Activated B cell treated with CpG ODN at 0.5 μM for 24 hours (primary cell): ENCODE measurements at regions of chr10 and their contacts with region 1.

Region 1: DNA sequence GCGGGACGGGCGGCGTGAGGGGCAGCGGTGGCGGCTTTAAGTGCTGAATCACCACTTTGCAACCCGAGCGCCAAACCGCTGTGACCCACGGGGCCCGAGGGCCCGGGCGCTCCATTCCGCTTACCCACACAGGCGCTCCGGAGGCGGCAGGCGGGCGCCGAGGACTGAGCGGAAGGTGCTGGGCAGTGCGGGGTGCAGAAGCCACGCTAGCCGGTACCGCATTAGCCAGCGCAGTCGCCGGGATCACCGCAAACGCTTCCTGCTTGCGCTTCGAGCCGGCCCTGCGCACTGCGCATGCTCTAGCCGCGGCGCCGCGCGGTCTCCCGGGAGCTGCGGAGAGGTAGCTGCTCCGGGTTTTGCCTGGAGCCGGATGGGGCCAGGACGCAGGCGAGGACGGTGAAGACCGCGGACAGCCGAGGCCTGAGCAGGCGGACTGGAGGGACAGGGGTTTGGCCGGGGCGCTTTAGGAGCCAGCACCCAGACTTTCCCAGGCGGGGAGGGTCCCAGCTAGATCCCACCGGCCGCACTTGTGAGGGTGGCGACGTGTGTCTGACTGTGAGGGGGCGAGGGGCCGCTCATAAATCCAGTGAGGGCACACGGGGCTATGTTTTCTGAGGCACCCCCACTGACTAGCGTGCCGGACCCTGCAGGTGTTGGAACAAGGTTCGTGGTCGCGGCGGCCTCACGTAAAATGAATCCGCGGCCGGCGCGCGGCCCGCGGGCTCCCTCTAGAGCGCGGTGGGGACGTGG is at the start of gene IDE:
- DNase-seq: peak; percentile 84
- ATAC-seq: peak; percentile 76
- H3K4me3 Mint-ChIP-seq: peak within 1 kb of the TSS; percentile 88
- H3K27ac Mint-ChIP-seq: peak within 1 kb of the TSS; percentile 85
- H3K4me1 Mint-ChIP-seq: peaks cover 40% of the 10 kb centered on the region
- H3K27me3 Mint-ChIP-seq: no peaks in the 10 kb centered on the region
- CTCF ChIP-seq: no peak
- total RNA-seq, gene IDE: 37.7 and 39.2 TPM in 2 replicates

Region 2: DNA sequence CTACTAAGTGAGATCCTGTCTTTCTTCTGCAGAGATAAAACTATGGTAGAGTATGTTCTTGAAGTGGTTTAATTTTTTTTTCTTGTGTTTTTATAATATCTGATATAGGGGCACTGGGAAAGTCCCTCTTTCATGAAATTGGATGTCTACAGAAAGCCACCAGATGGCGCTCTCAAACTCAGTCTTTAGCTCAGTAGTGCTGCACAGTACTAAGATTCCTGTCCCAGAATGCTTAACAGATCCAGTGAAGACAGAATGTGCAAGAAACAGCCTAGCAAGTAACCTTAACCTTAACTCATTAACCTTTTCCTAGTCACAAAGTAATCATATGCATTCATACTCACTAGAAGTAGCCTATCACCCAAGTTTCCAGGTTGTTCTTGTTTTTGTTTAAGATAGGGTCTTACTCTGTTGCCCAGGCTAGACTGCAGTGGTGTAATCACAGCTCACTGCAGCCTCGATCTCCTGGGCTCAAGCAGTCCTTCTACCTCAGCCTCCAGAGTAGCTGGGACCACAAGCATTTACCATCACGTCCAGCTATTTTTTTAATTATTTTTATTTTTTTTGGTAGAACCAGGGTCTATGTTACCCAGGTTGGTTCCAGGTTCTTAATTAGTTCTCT is 56.8 kb before region 1 on chr10:
- CTCF ChIA-PET with region 1: interaction called, 143 read pairs
- POLR2A ChIA-PET with region 1: interaction called, 23 read pairs
- intact Hi-C with region 1: loop called (anchors 1 kb)
- DNase-seq: no peak
- ATAC-seq: peak; percentile 88
- H3K4me3 Mint-ChIP-seq: no peak overlapping the region
- H3K27ac Mint-ChIP-seq: no peak overlapping the region
- H3K4me1 Mint-ChIP-seq: peaks cover 6% of the 10 kb centered on the region
- H3K27me3 Mint-ChIP-seq: no peaks in the 10 kb centered on the region
- CTCF ChIP-seq: peak; percentile 30

Region 3: GRCh38 chr10:92538231-92538958 is 35.6 kb before region 1 on chr10:
- CTCF ChIA-PET with region 1: interaction called, 3 read pairs
- POLR2A ChIA-PET with region 1: interaction called, 4 read pairs
- intact Hi-C with region 1: loop called (anchors 5 kb)
- DNase-seq: no peak
- ATAC-seq: no peak
- H3K4me3 Mint-ChIP-seq: no peak overlapping the region
- H3K27ac Mint-ChIP-seq: no peak overlapping the region
- H3K4me1 Mint-ChIP-seq: peaks cover 26% of the 10 kb centered on the region
- H3K27me3 Mint-ChIP-seq: no peaks in the 10 kb centered on the region
- CTCF ChIP-seq: no peak

Region 4: DNA sequence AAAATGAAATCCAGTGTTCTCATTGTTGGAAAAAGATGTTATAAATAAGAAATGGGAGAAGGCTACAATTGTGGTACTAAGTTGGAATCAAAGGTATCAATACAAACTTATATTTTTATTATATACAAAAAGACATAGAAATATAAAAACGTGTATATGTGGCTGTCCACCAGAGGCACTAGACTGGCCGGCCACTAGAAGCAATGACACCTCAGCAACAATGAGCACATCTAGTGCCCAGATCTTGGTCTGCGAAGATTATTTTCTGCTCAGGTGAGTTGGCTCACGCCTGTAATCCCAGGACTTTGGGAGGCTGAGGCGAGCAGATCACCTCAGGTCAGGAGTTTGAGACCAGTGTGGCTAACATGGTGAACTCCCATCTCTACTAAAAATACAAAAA is 21.7 kb before region 1 on chr10:
- CTCF ChIA-PET with region 1: interaction called, 3 read pairs
- POLR2A ChIA-PET with region 1: interaction called, 5 read pairs
- intact Hi-C with region 1: loop called (anchors 2 kb)
- DNase-seq: no peak
- ATAC-seq: no peak
- H3K4me3 Mint-ChIP-seq: no peak overlapping the region
- H3K27ac Mint-ChIP-seq: no peak overlapping the region
- H3K4me1 Mint-ChIP-seq: peaks cover 17% of the 10 kb centered on the region
- H3K27me3 Mint-ChIP-seq: no peaks in the 10 kb centered on the region
- CTCF ChIP-seq: no peak

Region 5: DNA sequence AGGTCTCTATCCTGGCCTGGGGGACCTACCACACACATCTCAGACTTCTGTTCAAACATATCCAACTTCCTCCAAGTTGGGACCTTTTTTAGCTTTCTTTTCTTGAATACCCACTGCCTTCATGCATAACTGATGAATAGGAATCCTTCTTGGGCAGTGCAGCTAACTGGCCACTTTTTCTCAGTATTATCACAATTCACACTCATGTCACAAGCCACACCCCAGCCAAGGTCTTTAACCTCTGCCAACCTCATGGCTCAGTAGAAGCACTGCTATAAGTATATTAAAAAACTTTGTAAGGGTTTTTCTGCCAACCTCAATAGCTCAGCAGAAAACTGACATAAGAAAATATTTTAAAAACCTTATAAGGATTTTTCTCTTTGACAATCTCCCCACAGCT is 160.3 kb after region 1 on chr10:
- CTCF ChIA-PET with region 1: no interaction called
- POLR2A ChIA-PET with region 1: no interaction called
- intact Hi-C with region 1: no loop called
- DNase-seq: no peak
- ATAC-seq: no peak
- H3K4me3 Mint-ChIP-seq: no peak overlapping the region
- H3K27ac Mint-ChIP-seq: no peak overlapping the region
- H3K4me1 Mint-ChIP-seq: peaks cover 64% of the 10 kb centered on the region
- H3K27me3 Mint-ChIP-seq: no peaks in the 10 kb centered on the region
- CTCF ChIP-seq: no peak